Dorsolateral prefrontal cortex (tissue), 120 donors: ENCODE measurements at regions of chr2 and their contacts with region 1.

Region 1: GRCh38 chr2:190180313-190181122 is 118.0 kb upstream of the MSTN start:
- DNase-seq: peak; percentile 6 to 76 (median 57)
- H3K4me3 ChIP-seq: peak overlapping the region; percentile 52 to 92 (median 73)
- H3K27ac ChIP-seq: peak overlapping the region; percentile 70 to 99 (median 96)
- H3K27me3 ChIP-seq: no peaks in the 10 kb centered on the region
- CTCF ChIP-seq: peak in 50 of 56 donors; percentile 25 to 73 (median 56)

Region 2: GRCh38 chr2:190121971-190122370 is 58.5 kb before region 1 on chr2:
- intact Hi-C with region 1: loop called in 1 of 2 experiments (anchors 2 kb)
- DNase-seq: no peak
- H3K4me3 ChIP-seq: no peak overlapping the region
- H3K27ac ChIP-seq: peak overlapping the region in 48 of 59 donors; percentile 1 to 85 (median 62)
- H3K27me3 ChIP-seq: no peaks in the 10 kb centered on the region
- CTCF ChIP-seq: peak; percentile 30 to 84 (median 63)

Region 3: GRCh38 chr2:190136259-190136658 is 44.3 kb before region 1 on chr2:
- intact Hi-C with region 1: no loop called
- DNase-seq: no peak
- H3K4me3 ChIP-seq: no peak overlapping the region
- H3K27ac ChIP-seq: no peak overlapping the region
- H3K27me3 ChIP-seq: no peaks in the 10 kb centered on the region
- CTCF ChIP-seq: no peak

Region 4: DNA sequence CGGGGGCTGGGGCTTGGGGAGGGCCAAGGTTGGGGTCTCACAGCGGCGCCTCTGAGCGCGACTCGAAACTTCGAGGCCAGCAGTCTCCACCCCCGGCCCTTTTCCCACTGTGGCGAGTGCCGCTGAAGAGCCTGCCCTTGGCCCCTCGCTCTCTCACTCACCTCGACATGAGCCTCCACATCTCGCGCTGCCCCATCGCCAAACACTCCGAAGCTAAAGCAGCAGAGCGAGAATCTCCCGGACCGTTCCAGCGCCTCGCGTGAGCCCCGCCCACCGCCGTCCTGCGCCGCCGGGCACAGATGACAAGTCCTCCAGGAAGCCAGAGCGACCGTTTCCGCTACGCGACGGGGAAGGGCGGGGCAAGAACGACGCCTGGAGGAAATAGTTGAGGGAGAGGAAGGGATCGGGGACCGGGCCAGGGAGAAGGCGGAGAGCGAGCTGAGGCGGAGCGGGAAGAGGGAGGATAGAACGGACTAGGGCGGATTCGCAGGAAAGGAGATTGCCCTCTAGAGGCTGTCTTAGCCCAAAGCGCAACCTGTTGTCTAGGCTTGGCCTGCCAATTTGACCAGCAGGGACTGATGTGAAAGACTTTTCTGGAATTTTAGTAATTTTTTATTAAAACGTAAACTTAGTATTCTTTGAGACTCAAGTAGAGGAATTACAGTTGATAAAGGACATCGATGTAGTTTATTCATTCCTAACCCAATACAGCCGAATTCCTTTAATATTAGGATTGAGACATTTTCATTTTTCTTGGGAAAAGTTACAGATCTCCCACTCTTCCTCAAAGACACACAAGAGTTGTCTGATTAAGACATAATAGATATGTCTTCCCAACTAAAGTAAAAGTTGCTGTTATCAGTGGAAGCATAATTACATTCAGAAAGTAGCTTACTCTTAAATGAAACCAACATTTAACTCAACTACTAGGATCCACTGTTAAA is 139.3 kb after region 1 on chr2 and contains the start of gene HIBCH:
- intact Hi-C with region 1: loop called (anchors 1 to 5 kb)
- DNase-seq: peak; percentile 95 to 99 (median 98)
- H3K4me3 ChIP-seq: peak within 1 kb of the TSS; percentile 67 to 93 (median 81)
- H3K27ac ChIP-seq: peak within 1 kb of the TSS in 58 of 59 donors; percentile 82 to 99 (median 94)
- H3K27me3 ChIP-seq: no peaks in the 10 kb centered on the region
- CTCF ChIP-seq: peak; percentile 71 to 97 (median 90)
- total RNA-seq, gene HIBCH: 29.2 to 189 (median 49.2) TPM

Region 5: DNA sequence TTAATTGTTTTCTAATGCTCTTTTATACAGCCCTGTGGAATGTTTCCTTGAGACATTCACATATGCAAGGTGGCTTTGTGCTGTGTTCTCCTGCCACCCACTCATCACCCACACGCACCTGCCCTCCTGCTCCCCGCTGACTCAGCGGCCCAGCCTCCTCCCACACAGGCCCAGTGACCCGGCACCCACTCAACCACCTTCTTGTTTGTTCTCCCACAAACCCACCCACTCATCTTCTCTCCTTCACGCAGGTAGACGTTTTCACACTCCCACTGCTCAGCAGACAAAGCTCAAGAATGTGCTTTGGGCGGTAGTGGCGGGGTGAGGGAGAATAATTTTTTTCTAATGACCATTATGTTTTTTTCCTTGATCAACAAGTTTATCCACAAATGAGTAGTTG is 382.6 kb after region 1 on chr2:
- intact Hi-C with region 1: no loop called
- DNase-seq: peak in 1 of 10 donors; percentile 15
- H3K4me3 ChIP-seq: no peak overlapping the region
- H3K27ac ChIP-seq: no peak overlapping the region
- H3K27me3 ChIP-seq: no peaks in the 10 kb centered on the region
- CTCF ChIP-seq: no peak